PC-9 (cell line): ENCODE measurements at regions of chr1 and their contacts with region 1.

Region 1: GRCh38 chr1:9629445-9630201 is 21.9 kb upstream of the PIK3CD start:
- DNase-seq: no peak
- H3K4me3 ChIP-seq: no peak overlapping the region
- H3K27ac ChIP-seq: no peak overlapping the region
- H3K4me1 ChIP-seq: no peaks in the 10 kb centered on the region; the same call in 1 of the 2 replicates
- H3K27me3 ChIP-seq: no peaks in the 10 kb centered on the region
- CTCF ChIP-seq: no peak

Region 2: GRCh38 chr1:9362488-9362887 is 267.1 kb before region 1 on chr1:
- CTCF ChIA-PET with region 1: no interaction called
- POLR2A ChIA-PET with region 1: no interaction called
- intact Hi-C with region 1: no loop called
- DNase-seq: no peak
- H3K4me3 ChIP-seq: no peak overlapping the region
- H3K27ac ChIP-seq: no peak overlapping the region
- H3K4me1 ChIP-seq: no peaks in the 10 kb centered on the region
- H3K27me3 ChIP-seq: no peaks in the 10 kb centered on the region
- CTCF ChIP-seq: no peak

Region 3: DNA sequence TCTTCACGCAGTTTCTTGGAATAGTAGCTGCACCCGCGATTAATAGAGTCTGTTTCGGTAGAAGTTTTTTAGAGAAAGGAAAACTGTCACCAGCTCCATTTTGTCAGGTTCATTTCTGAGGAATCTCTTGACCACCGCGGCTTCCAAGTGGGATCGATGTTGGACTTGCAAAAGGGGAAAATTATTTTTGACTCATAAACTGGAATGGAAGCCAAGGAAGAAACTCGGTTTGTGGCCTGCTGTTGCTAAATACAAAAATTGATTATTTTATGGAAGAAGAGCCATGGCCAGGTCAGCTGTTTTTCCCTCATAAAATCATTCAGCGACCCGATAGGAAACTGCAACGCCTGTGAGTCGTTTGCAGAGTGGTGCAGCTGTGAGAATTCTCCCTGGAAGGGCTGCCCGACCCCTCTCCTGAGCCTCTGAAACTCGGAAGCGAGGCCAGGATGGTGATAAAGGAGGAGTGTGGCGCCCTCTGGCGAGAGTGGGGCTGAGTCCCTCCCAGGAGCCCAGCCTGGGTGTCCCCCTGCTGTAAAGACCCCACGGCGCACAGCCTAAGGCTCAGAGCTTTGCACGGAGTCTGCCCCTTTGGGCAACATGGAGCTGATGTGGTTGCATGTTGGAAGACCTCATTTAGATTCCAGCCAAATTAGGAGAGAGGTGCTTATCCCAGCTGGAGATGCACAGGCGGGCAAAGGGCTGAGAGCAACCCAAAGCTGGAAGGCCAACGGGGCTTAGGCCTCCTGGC is 174.0 kb before region 1 on chr1:
- CTCF ChIA-PET with region 1: no interaction called
- POLR2A ChIA-PET with region 1: no interaction called
- intact Hi-C with region 1: no loop called
- DNase-seq: peak in 1 of 2 experiments; percentile 34
- H3K4me3 ChIP-seq: no peak overlapping the region
- H3K27ac ChIP-seq: no peak overlapping the region
- H3K4me1 ChIP-seq: no peaks in the 10 kb centered on the region; the same call in 1 of the 2 replicates
- H3K27me3 ChIP-seq: no peaks in the 10 kb centered on the region
- CTCF ChIP-seq: peak; percentile 73

Region 4: DNA sequence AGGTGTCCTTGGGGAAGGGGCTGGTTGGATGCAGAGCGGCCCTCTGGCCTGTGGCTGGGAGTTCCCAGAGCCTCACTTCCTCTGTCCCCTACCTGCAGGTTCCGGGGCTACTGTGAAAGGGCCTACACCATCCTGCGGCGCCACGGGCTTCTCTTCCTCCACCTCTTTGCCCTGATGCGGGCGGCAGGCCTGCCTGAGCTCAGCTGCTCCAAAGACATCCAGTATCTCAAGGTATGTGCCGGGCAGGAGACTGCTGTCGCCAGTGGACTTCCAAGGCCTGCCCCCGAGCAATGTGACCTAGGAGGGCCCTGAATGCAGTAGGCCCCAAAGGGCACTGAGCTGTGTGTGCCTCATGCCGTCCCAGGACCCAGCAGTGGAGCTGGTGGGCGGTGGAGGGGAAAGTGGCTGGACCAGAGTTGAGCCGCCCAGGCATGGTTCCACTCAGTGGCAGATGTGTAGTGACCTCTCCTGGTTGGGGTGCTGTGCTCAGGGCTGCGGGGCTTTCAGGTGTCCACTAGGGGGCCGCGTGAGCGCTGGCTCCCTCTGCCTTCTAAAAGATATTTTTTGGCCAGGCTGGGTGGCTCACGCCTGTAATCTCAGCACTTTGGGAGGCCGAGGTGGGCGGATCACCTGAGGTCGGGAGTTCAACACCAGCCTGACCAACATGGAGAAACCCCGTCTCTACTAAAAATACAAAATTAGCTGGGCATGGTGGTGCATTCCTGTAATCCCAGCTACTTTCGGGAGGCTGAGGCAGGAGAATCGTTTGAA is 95.3 kb after region 1 on chr1:
- CTCF ChIA-PET with region 1: interaction called, 3 read pairs
- POLR2A ChIA-PET with region 1: no interaction called
- intact Hi-C with region 1: loop called (anchors 1 kb)
- DNase-seq: peak in 1 of 2 experiments; percentile 65
- H3K4me3 ChIP-seq: no peak overlapping the region
- H3K27ac ChIP-seq: no peak overlapping the region
- H3K4me1 ChIP-seq: no peaks in the 10 kb centered on the region
- H3K27me3 ChIP-seq: no peaks in the 10 kb centered on the region
- CTCF ChIP-seq: peak; percentile 84